Spleen (tissue), 13 donors: ENCODE measurements at regions of chr15 and their contacts with region 1.

Region 1: GRCh38 chr15:34241372-34242330 is 16.8 kb downstream of the EMC4 start:
- DNase-seq: no peak
- H3K4me3 ChIP-seq: no peak overlapping the region
- H3K27ac ChIP-seq: no peak overlapping the region
- H3K4me1 ChIP-seq: no peaks in the 10 kb centered on the region
- H3K27me3 ChIP-seq: no peaks in the 10 kb centered on the region
- CTCF ChIP-seq: peak; percentile 57 to 89 (median 79)
- POLR2A ChIP-seq: no peak

Region 2: GRCh38 chr15:34367101-34368081 is 125.7 kb after region 1 on chr15 and contains the start of gene LPCAT4:
- intact Hi-C with region 1: loop called (anchors 10 kb)
- DNase-seq: peak; percentile 99
- H3K4me3 ChIP-seq: peak within 1 kb of the TSS; percentile 58 to 99 (median 94)
- H3K27ac ChIP-seq: peak within 1 kb of the TSS; percentile 93 to 100 (median 98)
- H3K4me1 ChIP-seq: peaks cover 6 to 50% (median 30%) of the 10 kb centered on the region in 6 donors
- H3K27me3 ChIP-seq: no peaks in the 10 kb centered on the region
- CTCF ChIP-seq: peak; percentile 92 to 98 (median 97)
- POLR2A ChIP-seq: peak in 2 of 3 donors; percentile 19 to 36
- total RNA-seq, gene LPCAT4: 24.9 to 53.7 (median 47.4) TPM

Region 3: GRCh38 chr15:34587717-34588674 is 346.3 kb after region 1 on chr15:
- intact Hi-C with region 1: loop called (anchors 10 kb)
- DNase-seq: peak; percentile 66
- H3K4me3 ChIP-seq: peak overlapping the region in 2 of 8 donors; percentile 22 to 53
- H3K27ac ChIP-seq: peak overlapping the region in 4 of 8 donors; percentile 10 to 57 (median 20)
- H3K4me1 ChIP-seq: peaks cover 0 to 19% (median 11%) of the 10 kb centered on the region in 6 donors
- H3K27me3 ChIP-seq: peaks cover 0 to 14% (median 0%) of the 10 kb centered on the region in 7 donors
- CTCF ChIP-seq: peak; percentile 35 to 81 (median 79)
- POLR2A ChIP-seq: no peak